ENCODE measurements at regions of chr2 and their contacts with region 1.

Region 1: GRCh38 chr2:64750817-64751285 is 97.1 kb upstream of the SERTAD2 start:
- DNase-seq: peak; percentile 100

Region 2: DNA sequence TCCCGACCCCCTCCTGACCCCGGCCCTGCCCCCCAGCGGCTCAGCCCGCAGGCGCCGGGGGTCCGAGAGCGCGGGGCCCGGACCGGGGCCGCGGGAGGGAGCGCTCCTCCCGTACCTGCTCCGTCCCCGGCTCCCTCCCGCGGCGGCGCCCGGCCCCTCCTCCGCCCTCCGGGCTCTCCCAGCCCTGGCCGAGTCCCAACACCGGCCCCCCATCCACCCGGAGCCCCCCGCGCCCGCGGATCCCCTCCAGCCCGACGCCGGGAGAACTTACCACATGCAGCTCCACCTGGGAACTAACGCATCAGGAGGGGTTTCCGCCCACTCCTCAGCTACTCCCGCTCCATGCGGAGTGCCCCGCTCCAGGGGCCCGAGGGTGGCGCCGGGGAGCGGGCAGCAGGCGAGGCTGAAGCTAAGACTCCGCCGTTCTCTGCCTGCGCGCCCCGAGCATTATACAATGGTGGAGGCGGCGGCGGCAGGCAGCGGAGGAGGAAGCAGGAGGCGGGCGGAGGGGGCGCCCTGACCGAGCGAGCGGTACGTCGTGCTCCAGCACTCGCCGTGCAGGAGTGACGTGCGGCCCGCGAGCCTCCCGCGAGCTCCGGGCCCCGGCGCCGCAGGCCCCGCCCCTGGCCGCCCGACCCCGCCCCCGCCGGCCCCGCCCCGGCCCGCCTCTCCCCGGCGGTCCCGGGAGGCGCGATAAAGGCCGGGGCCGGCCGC is 97.3 kb before region 1 on chr2 and contains the start of gene SERTAD2:
- intact Hi-C with region 1: loop called (anchors 1 kb)
- DNase-seq: peak; percentile 94
- total RNA-seq, gene SERTAD2: 22.8 TPM

Region 3: GRCh38 chr2:64767670-64768468 is 17.0 kb after region 1 on chr2:
- intact Hi-C with region 1: loop called (anchors 1 kb)
- DNase-seq: peak; percentile 94

Region 4: DNA sequence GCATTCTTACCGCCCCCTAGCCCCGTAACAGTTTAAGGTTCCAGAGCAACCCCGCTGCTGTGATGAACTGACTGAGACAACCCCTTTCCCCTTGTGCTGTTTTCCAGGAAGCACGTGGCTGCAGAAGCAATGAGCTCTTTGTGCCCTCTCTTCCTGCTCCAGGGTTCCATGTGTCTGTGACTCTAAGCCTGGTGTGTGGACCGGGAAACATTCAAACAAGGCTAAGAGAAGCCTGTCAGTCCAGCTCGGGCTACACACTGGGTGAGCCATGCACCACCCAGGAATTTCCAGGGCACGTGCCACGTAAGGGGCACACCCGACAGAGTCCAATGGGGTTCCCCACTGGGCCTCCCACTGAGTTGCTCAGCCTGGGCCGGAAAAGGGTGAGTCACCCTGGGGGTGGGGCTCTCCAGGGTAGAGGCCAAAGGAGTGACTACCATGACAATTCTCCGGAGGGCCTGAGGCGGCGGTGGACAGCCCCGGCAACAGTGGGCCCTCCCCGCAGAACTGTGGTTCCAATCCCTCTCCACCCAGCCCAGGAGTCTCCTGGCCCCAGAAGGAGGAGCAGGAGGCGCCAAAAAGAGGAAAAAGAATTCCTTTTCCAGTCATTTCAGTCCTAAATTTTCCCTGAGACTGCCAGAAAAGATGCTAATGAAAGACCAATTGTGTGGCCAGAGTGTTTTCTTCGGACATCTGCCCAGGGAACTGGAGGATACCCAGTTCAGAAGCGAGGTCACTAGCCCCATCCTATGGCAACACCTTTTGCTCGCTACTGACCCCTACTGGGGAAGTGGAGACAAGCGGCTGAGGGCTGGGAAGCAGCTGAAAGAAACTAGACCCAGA is 80.5 kb after region 1 on chr2:
- intact Hi-C with region 1: loop called (anchors 5 kb)
- DNase-seq: peak; percentile 92

Region 5: GRCh38 chr2:64859312-64860212 is 108.7 kb after region 1 on chr2:
- intact Hi-C with region 1: loop called (anchors 2 kb)
- DNase-seq: peak; percentile 93

Region 6: DNA sequence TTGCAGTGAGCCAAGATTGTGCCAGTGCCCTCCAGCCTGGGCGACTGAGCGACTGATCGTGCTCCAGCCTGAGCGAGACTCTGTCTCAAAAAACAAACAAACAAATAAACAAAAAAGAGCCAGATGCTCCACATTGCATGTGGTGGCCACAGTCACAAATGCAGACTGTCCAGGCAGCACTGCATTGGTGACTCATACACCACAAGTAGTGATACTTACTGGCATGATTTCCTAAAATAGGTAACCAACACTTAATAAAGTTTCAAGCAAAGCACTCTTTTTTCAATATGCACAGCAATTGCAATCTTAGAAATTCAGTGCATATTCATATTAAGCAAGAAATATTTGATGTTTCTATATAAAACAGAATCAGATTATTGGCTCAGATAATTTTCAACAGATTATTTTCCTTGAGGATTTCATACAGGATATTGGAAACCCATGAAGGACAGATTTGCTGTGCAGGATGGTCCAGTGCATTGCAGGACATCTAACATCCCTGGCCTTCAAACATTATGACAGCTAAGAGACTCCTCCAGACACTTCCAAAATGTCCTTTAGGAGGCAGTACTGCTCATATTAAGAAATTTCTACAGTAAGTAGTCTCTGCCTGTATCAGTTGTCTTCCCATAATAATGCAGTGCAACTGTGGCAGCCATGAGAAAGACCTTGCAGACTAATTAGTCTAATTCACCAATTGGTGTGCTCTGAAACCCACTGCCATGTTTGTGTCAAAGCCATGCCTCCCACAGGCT is 227.8 kb after region 1 on chr2:
- intact Hi-C with region 1: no loop called
- DNase-seq: no peak

Measured in cardiac septum (tissue), 1 donor.